Activated T-helper 1 cell treated with anti-CD3 and anti-CD28 coated beads, Interleukin-12 subunit alpha, Interleukin-12 subunit beta, Interleukin-2, Interleukin-4 antibody, amounts not matched to agents 30 ng/mL and 10 ng/mL and 1 ng/mL, durations not matched to agents 14 hours and 24 hours and 36 hours (primary cell): ENCODE measurements at regions of chr11 and their contacts with region 1.

Region 1: DNA sequence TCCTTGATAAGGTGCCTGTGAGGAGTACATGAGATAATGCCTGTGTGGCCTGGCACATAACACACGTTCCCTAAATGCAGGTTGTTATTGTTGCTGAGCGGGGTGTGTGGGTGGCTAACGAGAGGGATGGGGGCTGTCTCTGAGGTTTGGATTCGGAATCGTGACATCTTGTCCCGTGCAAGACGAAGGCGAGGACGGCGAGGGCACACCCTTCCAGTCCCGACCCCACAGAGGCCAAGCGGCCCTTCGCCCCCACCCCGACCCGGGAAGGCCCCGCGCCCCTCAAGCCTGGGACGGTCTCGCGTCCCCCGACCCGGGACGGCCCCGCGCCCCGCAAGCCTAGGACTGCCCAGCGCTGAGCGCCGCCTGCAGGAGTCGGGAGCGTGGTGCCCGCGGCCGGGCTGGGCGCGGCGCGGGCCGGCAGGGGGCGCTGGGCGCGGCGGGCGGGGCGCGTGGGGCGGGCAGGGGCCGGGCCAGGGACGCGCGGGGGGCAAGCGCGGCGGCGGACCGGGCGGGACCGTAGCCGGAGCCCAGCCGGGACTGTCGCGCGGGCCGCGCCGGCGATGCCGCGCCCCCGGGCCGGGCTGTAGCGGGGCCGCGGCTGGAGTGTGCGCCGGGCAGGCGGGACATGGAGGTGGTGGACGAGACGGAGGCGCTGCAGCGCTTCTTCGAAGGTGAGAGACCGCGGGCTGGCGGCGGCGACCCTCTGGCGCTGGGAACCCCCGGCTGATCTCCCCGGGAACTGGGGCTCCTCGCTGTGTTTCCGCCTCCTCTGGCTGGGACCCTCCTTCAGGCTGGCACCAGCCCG is at the start of gene MYRF:
- DNase-seq: peak; percentile 52
- H3K4me3 Mint-ChIP-seq: peak within 1 kb of the TSS; percentile 76
- H3K27ac Mint-ChIP-seq: no peak within 1 kb of the TSS
- H3K4me1 Mint-ChIP-seq: no peaks in the 10 kb centered on the region
- H3K27me3 Mint-ChIP-seq: peaks cover 31% of the 10 kb centered on the region
- total RNA-seq, gene MYRF: 0.78 and 0.99 TPM in 2 replicates

Region 2: DNA sequence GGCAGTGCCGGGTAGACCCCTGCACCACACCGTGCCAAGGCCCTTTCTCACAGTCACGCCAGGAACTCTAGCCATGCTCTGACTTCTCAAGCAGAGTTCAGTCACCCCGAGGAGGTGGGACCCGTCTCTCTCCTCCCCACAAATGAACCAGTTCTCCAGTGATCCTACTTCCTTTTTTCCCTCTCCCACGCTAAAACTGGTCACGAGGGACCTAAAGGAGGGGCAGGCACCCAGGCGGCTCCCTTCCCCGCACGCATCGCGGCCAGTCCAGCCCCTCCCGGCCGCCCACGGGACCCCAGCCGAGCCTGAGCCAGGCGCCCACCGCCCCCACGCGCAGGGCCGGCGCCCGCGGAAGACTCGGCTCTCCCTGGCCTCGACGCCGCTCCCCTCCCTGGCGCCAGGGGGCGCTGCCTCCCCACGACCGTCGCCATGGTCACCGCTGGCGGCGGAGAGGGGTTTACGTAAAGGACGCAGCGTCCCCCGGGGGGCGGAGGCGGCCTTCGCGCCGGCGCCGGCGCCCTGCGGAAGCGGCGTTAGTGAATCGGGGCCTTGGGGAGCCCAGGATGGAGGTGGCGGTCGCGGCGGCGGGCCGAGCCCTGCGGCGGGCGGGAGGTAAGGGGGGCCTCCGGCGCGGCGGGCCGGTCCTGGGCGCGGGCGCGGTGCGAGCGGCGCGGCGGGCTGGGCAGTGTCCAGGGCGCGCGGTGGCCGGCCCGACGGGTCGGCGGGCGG is 72.3 kb before region 1 on chr11 and contains the start of gene DAGLA:
- intact Hi-C with region 1: no loop called
- DNase-seq: peak; percentile 68
- H3K4me3 Mint-ChIP-seq: peak within 1 kb of the TSS; percentile 75
- H3K27ac Mint-ChIP-seq: no peak within 1 kb of the TSS
- H3K4me1 Mint-ChIP-seq: no peaks in the 10 kb centered on the region
- H3K27me3 Mint-ChIP-seq: peaks cover 42% of the 10 kb centered on the region
- total RNA-seq, gene DAGLA: 0.18 and 0.20 TPM in 2 replicates

Region 3: GRCh38 chr11:61695917-61696316 is 56.4 kb before region 1 on chr11:
- intact Hi-C with region 1: loop called (anchors 5 kb)
- DNase-seq: peak; percentile 90
- H3K4me3 Mint-ChIP-seq: peak overlapping the region; percentile 70
- H3K27ac Mint-ChIP-seq: peak overlapping the region; percentile 82
- H3K4me1 Mint-ChIP-seq: peaks cover 25% of the 10 kb centered on the region
- H3K27me3 Mint-ChIP-seq: peaks cover 3% of the 10 kb centered on the region

Region 4: GRCh38 chr11:61776551-61777075 is 24.3 kb after region 1 on chr11:
- intact Hi-C with region 1: loop called (anchors 1 kb)
- DNase-seq: peak; percentile 48
- H3K4me3 Mint-ChIP-seq: peak overlapping the region; percentile 41
- H3K27ac Mint-ChIP-seq: no peak overlapping the region
- H3K4me1 Mint-ChIP-seq: peaks cover 8% of the 10 kb centered on the region
- H3K27me3 Mint-ChIP-seq: no peaks in the 10 kb centered on the region

Region 5: DNA sequence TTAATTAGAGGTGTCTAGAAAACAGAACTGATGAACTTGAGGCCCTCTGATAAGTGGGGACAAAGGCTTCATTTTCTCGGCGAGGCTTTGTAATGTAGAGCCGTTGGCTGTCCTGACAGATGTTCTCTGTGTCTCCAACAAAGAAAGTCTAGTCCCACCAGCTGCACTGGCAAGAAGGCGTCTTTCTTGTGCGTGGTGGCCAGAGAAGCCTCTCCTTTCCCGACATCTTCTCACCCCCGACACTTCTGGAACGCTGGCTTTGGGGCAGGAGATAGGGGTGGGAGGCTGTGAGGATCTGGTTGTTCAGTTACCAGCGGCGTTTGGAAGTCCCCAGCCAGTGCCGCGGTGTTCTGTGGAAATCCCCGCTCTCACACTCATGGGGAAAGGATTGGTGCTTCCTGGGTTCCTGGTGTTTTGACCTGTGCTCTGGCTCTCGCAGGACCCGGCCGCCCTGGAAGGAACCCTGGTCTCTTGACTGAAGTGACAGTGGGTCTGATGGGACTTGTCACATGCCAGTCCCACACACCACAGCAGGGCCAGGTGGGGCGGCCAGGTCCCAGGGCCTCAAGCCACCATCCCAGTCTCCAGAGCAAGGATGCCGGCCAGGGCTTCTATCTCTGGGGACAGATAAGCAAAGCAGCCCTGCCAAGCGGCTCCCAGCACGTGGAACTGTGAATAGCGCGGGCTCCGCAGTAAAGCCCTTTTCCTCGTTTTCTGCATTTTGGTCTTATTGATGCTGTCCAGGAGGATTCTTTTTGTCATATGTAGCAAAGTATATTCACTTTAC is 99.0 kb after region 1 on chr11:
- intact Hi-C with region 1: no loop called
- DNase-seq: no peak
- H3K4me3 Mint-ChIP-seq: no peak overlapping the region
- H3K27ac Mint-ChIP-seq: peak overlapping the region; percentile 36
- H3K4me1 Mint-ChIP-seq: peaks cover 3% of the 10 kb centered on the region
- H3K27me3 Mint-ChIP-seq: no peaks in the 10 kb centered on the region

Region 6: GRCh38 chr11:62108017-62108750 is 355.9 kb after region 1 on chr11:
- intact Hi-C with region 1: loop called (anchors 1 kb)
- DNase-seq: peak; percentile 12
- H3K4me3 Mint-ChIP-seq: no peak overlapping the region
- H3K27ac Mint-ChIP-seq: no peak overlapping the region
- H3K4me1 Mint-ChIP-seq: peaks cover 13% of the 10 kb centered on the region
- H3K27me3 Mint-ChIP-seq: peaks cover 4% of the 10 kb centered on the region